ENCODE measurements at regions of chr13 and their contacts with region 1.

Region 1: DNA sequence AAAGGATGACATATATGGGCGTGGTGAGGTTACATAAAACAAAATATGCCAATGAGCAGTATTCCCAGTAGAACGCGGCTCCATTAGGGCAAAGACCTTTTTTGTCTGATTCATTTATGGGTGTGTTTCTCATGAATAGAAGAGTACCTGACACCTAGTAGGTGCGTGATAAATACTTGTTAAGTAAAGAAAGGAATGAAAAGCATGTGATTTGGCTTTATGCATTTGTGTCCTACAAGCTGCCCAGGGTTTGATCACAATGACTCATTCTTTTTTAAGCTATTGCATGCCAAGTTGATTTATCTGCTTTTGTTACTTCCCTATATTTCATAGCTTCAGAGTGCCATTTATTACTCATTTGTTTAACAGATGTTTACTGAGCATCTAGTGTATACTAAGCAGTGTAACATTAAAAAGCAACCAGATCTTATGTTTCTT is 19.1 kb upstream of the KCTD4 start:
- DNase-seq: peak; percentile 98
- H3K4me3 ChIP-seq: peak overlapping the region in 1 of 3 experiments; percentile 17
- H3K27ac ChIP-seq: peak overlapping the region; percentile 91
- H3K4me1 ChIP-seq: peaks cover 44% of the 10 kb centered on the region
- H3K27me3 ChIP-seq: no peaks in the 10 kb centered on the region
- CTCF ChIP-seq: no peak

Region 2: GRCh38 chr13:44249431-44249836 is 970.5 kb before region 1 on chr13:
- CTCF ChIA-PET with region 1: no interaction called
- dilution Hi-C with region 1: no loop called
- in situ Hi-C with region 1: no loop called
- intact Hi-C with region 1: no loop called
- DNase-seq: peak; percentile 37
- H3K4me3 ChIP-seq: no peak overlapping the region
- H3K27ac ChIP-seq: no peak overlapping the region
- H3K4me1 ChIP-seq: peaks cover 5% of the 10 kb centered on the region
- H3K27me3 ChIP-seq: no peaks in the 10 kb centered on the region
- CTCF ChIP-seq: no peak

Region 3: GRCh38 chr13:44758630-44759383 is 461.1 kb before region 1 on chr13:
- CTCF ChIA-PET with region 1: no interaction called
- dilution Hi-C with region 1: no loop called
- in situ Hi-C with region 1: no loop called
- intact Hi-C with region 1: no loop called
- DNase-seq: peak; percentile 92
- H3K4me3 ChIP-seq: no peak overlapping the region
- H3K27ac ChIP-seq: peak overlapping the region; percentile 95
- H3K4me1 ChIP-seq: peaks cover 60% of the 10 kb centered on the region
- H3K27me3 ChIP-seq: no peaks in the 10 kb centered on the region
- CTCF ChIP-seq: no peak

Region 4: DNA sequence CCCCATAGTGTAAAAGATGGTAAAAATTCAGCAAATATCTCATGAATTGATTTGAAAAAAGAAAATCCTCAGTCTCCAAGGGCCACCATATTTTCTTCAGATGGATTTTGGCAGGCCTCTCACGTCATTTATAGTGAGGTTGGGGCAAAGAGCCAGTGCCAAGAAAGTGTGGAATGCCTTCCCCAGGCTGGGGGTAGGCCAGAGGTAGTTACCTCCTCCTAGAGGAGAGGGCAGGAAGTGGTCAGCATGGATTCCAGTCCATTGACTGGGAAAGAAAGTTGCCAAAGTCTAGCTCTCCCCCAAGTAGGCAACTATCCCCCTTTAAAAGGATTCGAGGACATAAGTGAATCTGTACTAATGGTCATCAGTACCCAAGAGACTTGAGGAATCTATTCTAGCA is 49.2 kb after region 1 on chr13:
- CTCF ChIA-PET with region 1: no interaction called
- dilution Hi-C with region 1: loop called (anchors 5 kb)
- in situ Hi-C with region 1: no loop called
- intact Hi-C with region 1: no loop called
- DNase-seq: peak; percentile 34
- H3K4me3 ChIP-seq: no peak overlapping the region
- H3K27ac ChIP-seq: no peak overlapping the region
- H3K4me1 ChIP-seq: peaks cover 6% of the 10 kb centered on the region
- H3K27me3 ChIP-seq: no peaks in the 10 kb centered on the region
- CTCF ChIP-seq: peak in 1 of 2 donors; percentile 26